HEK293 (cell line): ENCODE measurements at regions of chr3 and their contacts with region 1.

Region 1: GRCh38 chr3:46866720-46867549 is 3.7 kb upstream of the MYL3 start:
- H3K4me3 ChIP-seq: no peak overlapping the region
- H3K27ac ChIP-seq: no peak overlapping the region
- H3K4me1 ChIP-seq: no peaks in the 10 kb centered on the region
- CTCF ChIP-seq: peak; percentile 58; the same call in 1 of the 2 replicates

Region 2: DNA sequence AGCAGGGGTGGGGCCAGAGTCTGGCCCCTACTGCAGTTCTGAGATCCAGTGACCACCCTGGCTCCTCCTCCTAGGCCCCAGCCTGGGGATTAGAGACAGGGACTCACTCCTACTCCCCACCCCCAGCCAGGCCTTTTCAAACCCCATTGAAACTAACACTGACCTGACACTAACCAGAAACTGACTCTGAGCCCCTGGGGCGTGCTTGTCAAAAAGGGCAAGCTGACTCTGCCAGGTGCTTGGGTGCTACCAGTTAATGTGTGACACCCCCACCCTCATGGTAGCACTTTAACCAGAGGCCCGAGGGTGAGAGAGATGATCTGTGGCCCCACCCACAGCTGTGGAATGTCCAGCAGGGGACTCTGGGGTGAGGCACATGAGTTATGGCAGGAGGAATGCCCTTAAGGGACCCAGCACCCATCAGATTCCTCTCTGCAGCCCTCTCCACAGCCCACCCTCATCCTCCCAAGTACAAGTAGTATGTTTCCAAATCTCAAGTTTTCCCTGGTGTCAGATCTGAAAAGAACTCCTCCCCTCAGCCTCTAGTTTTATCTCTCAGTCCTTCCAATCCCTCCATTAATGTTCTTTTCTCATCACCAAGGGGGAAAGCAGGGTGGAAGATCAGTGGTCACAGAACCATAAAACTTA is 12.0 kb after region 1 on chr3:
- CTCF ChIA-PET with region 1: interaction called, 23 read pairs
- POLR2A ChIA-PET with region 1: interaction called, 4 read pairs
- H3K4me3 ChIP-seq: no peak overlapping the region
- H3K27ac ChIP-seq: no peak overlapping the region
- H3K4me1 ChIP-seq: no peaks in the 10 kb centered on the region
- CTCF ChIP-seq: no peak

Region 3: GRCh38 chr3:46895204-46895660 is 28.3 kb after region 1 on chr3:
- CTCF ChIA-PET with region 1: interaction called, 23 read pairs
- POLR2A ChIA-PET with region 1: no interaction called
- H3K4me3 ChIP-seq: no peak overlapping the region
- H3K27ac ChIP-seq: no peak overlapping the region
- H3K4me1 ChIP-seq: no peaks in the 10 kb centered on the region
- CTCF ChIP-seq: peak; percentile 58

Region 4: DNA sequence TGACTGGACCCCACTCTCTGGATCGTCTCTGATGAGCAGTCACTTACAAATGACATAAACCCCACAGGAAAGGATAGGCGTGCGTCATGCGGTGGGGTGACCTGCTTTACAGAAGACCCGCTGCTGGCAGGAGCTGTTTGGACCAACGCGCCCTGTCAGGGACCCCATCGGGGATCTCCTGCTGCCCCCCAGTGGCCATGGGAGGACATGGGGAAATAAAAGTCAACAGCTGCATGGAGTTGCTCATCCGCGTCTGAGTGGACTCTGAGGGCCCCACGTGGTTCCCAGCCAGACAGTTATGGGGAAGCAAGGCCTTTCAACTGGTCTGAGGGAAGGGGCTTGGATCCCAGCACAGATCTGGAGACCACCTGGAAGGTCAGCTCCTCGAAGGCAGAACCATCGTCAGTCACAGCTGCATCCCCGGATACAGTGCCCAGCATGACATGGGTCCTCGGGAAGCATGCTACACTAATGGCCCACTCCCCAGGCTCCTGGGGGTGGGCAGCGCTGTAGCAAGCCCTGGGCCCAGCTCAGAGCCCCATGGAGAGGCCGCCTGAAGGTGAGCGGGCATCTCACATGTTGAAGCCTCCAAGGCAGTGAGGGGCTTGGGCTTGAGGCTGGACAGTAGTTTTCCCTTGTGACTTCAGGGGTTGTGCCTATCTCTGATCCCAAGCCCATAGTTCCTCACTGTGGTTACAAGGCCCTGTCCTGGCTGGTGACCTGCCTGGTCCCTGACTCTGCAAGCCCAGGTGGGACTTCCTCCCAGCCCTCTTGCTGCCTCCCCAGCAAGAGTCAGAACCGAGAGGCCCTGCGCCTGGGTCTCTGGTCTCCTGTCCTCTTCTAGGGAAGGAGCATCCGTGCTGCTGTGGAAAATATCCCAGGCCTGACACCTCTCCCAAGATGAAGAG is 42.9 kb after region 1 on chr3:
- CTCF ChIA-PET with region 1: interaction called, 12 read pairs
- POLR2A ChIA-PET with region 1: no interaction called
- H3K4me3 ChIP-seq: no peak overlapping the region
- H3K27ac ChIP-seq: no peak overlapping the region
- H3K4me1 ChIP-seq: peaks cover 5% of the 10 kb centered on the region; the same call in 1 of the 2 replicates
- CTCF ChIP-seq: peak; percentile 78

Region 5: DNA sequence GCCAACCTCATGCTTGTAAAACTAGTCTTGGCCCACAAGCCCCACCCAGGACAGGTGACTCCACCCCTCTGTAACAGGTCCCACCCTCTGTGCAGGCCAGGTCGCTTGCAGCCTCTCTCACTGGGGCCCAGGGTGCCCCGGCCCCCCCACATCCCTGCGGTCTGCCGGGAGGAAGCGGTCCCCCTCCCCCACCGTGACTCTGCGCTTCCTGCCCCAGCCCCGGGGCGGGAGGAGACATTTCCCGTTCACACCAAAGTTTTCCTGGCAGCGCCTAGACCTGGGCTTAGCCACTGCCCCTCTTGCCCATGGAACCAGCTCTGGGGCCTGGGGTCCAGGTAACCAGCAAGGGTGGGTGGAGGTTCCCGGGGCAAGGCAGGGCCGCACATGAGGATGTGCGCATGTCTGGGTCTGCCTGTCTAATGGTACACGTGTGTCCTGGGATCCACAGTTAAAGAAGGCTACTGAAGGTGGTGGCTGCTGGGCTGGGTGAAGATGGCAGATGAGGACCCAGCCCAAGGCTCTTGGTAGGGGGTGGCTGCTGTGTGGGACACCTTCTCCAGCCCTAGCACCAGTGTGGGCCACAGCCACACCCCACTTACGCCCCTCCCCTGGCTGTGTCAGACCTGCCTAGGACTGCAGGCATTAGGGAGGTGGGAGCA is 120.9 kb after region 1 on chr3:
- CTCF ChIA-PET with region 1: no interaction called
- POLR2A ChIA-PET with region 1: no interaction called
- H3K4me3 ChIP-seq: no peak overlapping the region
- H3K27ac ChIP-seq: no peak overlapping the region
- H3K4me1 ChIP-seq: no peaks in the 10 kb centered on the region
- CTCF ChIP-seq: no peak